Colonic mucosa (tissue), 4 donors: ENCODE measurements at regions of chr10 and their contacts with region 1.

Region 1: DNA sequence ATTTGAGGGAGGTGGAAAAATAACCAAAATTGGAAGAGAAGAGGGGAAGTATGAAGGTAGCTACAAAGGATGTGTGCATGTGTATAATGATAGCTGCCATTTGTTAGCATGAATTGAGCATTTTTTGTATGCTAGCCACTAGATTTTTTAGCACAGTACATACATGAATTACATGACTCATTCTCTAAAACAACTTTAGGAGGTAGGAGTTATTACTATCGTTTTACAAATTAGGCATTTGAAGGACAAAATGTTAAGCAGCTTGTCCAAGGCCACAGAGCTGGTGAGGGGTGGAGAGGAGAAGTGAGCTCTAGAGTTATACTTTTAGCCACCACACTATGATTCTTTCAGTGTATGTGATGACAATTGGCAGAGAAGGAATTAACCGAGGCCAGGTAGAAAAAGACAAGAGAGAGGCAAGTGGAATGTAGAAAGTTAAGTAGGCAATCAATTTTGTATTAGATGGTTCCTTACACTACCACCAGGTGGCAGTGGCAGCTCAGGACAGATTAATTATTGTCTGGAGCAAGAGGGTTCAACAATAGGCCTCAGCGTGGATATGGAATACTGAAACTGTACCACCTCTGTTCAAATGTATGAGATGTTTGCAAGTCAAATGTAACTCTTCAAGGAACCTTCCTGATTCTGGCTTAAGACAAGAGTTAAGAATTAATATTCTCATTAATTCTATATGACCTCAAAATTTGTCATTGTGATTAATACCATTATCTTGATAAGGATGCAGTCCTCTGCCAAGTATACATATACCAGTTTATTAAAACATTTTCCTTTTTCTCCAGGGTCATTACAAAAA is 128.0 kb downstream of the MBL2 start:
- DNase-seq: peak; percentile 55
- H3K4me3 ChIP-seq: no peak overlapping the region
- H3K27ac ChIP-seq: no peak overlapping the region
- H3K4me1 ChIP-seq: no peaks in the 10 kb centered on the region
- H3K27me3 ChIP-seq: no peaks in the 10 kb centered on the region
- CTCF ChIP-seq: peak; percentile 72

Region 2: GRCh38 chr10:52729271-52730104 is 84.9 kb after region 1 on chr10:
- intact Hi-C with region 1: loop called (anchors 2 kb)
- DNase-seq: no peak
- H3K4me3 ChIP-seq: no peak overlapping the region
- H3K27ac ChIP-seq: no peak overlapping the region
- H3K4me1 ChIP-seq: no peaks in the 10 kb centered on the region
- H3K27me3 ChIP-seq: no peaks in the 10 kb centered on the region
- CTCF ChIP-seq: peak; percentile 40